ENCODE measurements at regions of chr2 and their contacts with region 1.

Region 1: DNA sequence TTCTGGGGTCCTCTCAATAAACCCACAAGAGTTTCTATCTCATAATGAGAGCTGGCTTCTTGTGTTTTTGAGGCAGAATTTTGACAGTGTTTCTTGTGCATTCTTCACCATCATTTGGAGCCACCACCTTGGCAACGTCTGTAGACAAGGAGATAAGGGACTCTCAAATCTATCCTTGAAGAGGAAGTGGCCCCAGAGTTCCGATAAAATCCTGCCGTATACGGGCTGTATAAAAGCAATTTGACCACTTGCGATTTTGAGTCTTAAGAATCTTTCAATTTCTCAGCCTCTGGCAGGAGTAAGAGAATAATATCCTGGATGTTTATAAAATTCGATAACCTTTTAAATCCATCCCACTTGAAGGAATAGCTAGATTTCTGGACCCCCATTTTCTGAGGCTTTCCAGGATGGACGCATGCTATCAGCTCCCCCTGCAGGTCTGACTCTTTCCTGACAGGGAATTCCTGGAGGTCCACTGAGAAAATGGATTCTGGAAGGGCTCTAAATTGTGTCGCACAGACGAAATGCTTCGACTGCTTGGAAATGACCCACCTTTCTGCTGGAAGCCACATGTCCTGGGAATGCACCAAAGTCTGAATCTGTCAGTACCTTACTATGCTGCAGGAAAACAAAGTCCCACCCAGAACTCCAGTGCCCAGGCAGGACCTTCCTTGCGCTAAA is 54.1 kb downstream of the E2F6 start:
- DNase-seq: peak in 1 of 2 experiments; percentile 61
- ATAC-seq: peak; percentile 66 to 79; a peak in 4 of 6 replicates
- H3K4me3 ChIP-seq: peak overlapping the region; percentile 25; the same call in 2 of the 3 replicates
- H3K27ac ChIP-seq: peak overlapping the region; percentile 52 to 65
- H3K4me1 ChIP-seq: peaks cover 30% of the 10 kb centered on the region
- CTCF ChIP-seq: peak; percentile 96
- EP300 ChIP-seq: no peak
- POLR2A ChIP-seq: no peak
- RAD21 ChIP-seq: peak; percentile 96 to 97

Region 2: DNA sequence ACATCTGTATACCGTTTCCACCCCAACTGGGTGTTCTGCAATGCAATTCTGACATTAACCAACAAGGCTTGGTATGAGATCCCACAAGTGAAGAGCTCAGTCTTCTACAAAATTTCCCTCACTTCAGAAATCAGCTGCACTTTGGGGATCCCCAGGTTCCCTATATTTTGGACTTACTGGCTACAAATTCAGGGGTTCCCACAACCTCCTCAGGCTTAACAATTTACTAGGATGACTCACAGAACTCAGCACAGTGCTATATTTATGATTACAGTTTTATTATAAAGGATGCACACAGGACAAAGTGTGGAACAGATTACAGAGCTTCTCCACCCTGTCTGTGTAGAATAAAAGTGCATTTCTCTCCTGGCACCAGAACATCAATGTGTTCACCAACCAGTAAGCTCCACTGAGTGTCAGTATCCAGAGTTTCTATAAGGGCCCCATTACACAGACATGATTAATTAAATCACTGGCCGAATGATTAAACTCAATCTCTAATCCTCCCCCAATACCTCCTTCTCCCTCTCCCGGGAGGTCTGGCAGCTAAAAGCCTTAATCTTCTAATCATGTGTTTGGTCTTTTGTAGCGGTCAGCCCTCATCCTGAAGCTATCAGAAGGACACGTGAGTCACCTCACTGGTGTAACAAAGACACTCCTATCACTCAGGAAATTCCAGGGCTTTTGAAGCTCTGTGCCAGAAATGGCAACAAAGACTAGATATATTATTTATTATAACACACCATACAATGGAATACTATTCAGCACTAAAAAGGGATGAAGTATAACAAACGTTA is 172.0 kb before region 1 on chr2:
- CTCF ChIA-PET with region 1: interaction called, 50 read pairs
- POLR2A ChIA-PET with region 1: no interaction called
- DNase-seq: peak in 1 of 2 experiments; percentile 26
- ATAC-seq: peak in 1 of 2 experiments; percentile 50; a peak in 3 of 6 replicates
- H3K4me3 ChIP-seq: no peak overlapping the region
- H3K27ac ChIP-seq: 0 out of 6 replicates have a peak overlapping the region, but pooled peaks of 1 of the 2 experiments have one; percentile 1
- H3K4me1 ChIP-seq: peaks cover 40% of the 10 kb centered on the region
- CTCF ChIP-seq: no peak
- EP300 ChIP-seq: no peak
- POLR2A ChIP-seq: no peak
- RAD21 ChIP-seq: no peak

Region 3: GRCh38 chr2:11377928-11378545 is 33.9 kb before region 1 on chr2:
- CTCF ChIA-PET with region 1: interaction called, 10 read pairs
- POLR2A ChIA-PET with region 1: no interaction called
- DNase-seq: no peak
- ATAC-seq: no peak
- H3K4me3 ChIP-seq: no peak overlapping the region
- H3K27ac ChIP-seq: peak overlapping the region in 1 of 2 experiments; percentile 50; a peak in 4 of 6 replicates
- H3K4me1 ChIP-seq: peaks cover 40% of the 10 kb centered on the region
- CTCF ChIP-seq: no peak
- EP300 ChIP-seq: no peak
- POLR2A ChIP-seq: no peak
- RAD21 ChIP-seq: no peak

Region 4: DNA sequence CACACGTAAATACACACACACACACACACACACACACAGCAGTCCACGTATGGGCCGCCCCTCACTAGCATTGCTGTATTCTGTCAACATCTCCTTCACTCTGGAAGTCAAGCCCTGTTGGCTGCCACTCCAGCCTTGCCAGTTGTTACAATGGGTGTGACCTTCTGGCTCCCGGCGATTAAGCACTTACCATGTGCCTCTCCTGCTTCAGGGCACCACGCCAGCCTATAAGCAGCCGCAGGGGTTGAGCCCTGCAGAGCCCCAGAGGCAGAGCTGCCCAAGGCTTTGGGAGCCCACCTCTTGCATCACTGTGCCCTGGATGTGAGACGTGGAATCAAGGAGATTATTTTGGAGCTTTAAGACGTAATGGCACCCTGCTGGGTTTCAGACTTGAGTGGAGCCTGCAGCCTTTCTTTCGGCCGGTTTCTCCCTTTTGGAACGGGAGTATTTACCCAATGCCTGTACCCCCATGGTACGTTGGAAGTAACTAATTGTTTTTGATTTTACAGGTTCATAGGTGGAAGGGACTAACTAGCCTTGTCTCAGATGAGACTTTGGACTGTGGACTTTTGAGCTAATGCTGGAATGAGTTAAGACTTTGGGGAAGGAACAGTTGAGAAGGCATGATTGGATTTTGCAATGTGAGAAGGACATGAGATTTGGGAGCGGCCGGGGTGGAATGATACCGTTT is 13.0 kb before region 1 on chr2:
- CTCF ChIA-PET with region 1: interaction called, 23 read pairs
- POLR2A ChIA-PET with region 1: no interaction called
- DNase-seq: no peak
- ATAC-seq: no peak
- H3K4me3 ChIP-seq: no peak overlapping the region
- H3K27ac ChIP-seq: peak overlapping the region in 1 of 2 experiments; percentile 55; a peak in 3 of 6 replicates
- H3K4me1 ChIP-seq: peaks cover 17% of the 10 kb centered on the region
- CTCF ChIP-seq: no peak
- EP300 ChIP-seq: no peak
- POLR2A ChIP-seq: no peak
- RAD21 ChIP-seq: no peak

Region 5: DNA sequence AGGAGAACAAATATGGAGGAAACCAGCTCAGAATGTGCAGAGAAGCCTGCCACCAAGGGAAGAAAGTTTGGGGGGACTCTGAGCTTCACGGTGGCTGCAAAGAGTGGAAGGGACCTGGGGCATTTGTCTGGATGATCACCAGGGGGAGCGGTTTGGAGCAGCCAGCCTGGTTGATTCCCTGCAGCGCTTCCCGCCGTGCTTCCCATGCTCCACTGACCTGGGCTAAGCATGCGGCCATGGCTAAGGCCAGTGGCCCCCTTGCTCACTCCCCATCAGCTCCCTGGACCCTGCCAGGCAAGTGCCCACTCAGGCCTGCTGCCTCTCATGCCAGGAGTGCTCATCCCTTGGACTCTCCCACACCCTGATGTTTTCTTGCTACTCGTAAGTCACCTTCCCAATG is 231.1 kb after region 1 on chr2:
- CTCF ChIA-PET with region 1: no interaction called
- POLR2A ChIA-PET with region 1: no interaction called
- DNase-seq: peak in 1 of 2 experiments; percentile 27
- ATAC-seq: peak; percentile 56 to 70; a peak in 4 of 6 replicates
- H3K4me3 ChIP-seq: no peak overlapping the region
- H3K27ac ChIP-seq: no peak overlapping the region
- H3K4me1 ChIP-seq: no peaks in the 10 kb centered on the region
- CTCF ChIP-seq: no peak
- EP300 ChIP-seq: no peak
- POLR2A ChIP-seq: no peak
- RAD21 ChIP-seq: no peak

Region 6: GRCh38 chr2:11710234-11710975 is 298.5 kb after region 1 on chr2:
- CTCF ChIA-PET with region 1: no interaction called
- POLR2A ChIA-PET with region 1: no interaction called
- DNase-seq: peak; percentile 48 to 50
- ATAC-seq: peak; percentile 82 to 84
- H3K4me3 ChIP-seq: no peak overlapping the region
- H3K27ac ChIP-seq: peak overlapping the region in 1 of 2 experiments; percentile 34; a peak in 2 of 6 replicates
- H3K4me1 ChIP-seq: peaks cover 19% of the 10 kb centered on the region
- CTCF ChIP-seq: no peak
- EP300 ChIP-seq: no peak
- POLR2A ChIP-seq: no peak
- RAD21 ChIP-seq: no peak